CD8-positive, alpha-beta memory T cell (primary cell): ENCODE measurements at regions of chr14 and their contacts with region 1.

Region 1: GRCh38 chr14:22570132-22570949 is 18.7 kb downstream of the DAD1 start:
- DNase-seq: peak; percentile 70 to 97 (median 93)
- H3K4me3 ChIP-seq: peak overlapping the region; percentile 40
- H3K4me3 Mint-ChIP-seq: peak overlapping the region; percentile 55 to 88 (median 83)
- H3K27ac ChIP-seq: peak overlapping the region; percentile 55
- H3K27ac Mint-ChIP-seq: peak overlapping the region; percentile 89 to 99 (median 98)
- H3K4me1 ChIP-seq: peaks cover 49% of the 10 kb centered on the region
- H3K4me1 Mint-ChIP-seq: peaks cover 52 to 59% (median 59%) of the 10 kb centered on the region in 3 donors
- H3K27me3 ChIP-seq: no peaks in the 10 kb centered on the region
- H3K27me3 Mint-ChIP-seq: no peaks in the 10 kb centered on the region

Region 2: GRCh38 chr14:22505697-22506377 is 64.5 kb before region 1 on chr14:
- CTCF ChIA-PET with region 1: interaction called, 10 read pairs
- POLR2A ChIA-PET with region 1: interaction called, 5 read pairs
- DNase-seq: no peak
- H3K4me3 ChIP-seq: peak overlapping the region; percentile 65
- H3K4me3 Mint-ChIP-seq: peak overlapping the region; percentile 89 to 98 (median 91)
- H3K27ac ChIP-seq: peak overlapping the region; percentile 14
- H3K27ac Mint-ChIP-seq: peak overlapping the region; percentile 92 to 100 (median 96)
- H3K4me1 ChIP-seq: peaks cover 48% of the 10 kb centered on the region
- H3K4me1 Mint-ChIP-seq: peaks cover 55 to 66% (median 62%) of the 10 kb centered on the region in 3 donors
- H3K27me3 ChIP-seq: no peaks in the 10 kb centered on the region
- H3K27me3 Mint-ChIP-seq: peaks cover 0 to 1% of the 10 kb centered on the region in 2 donors

Region 3: GRCh38 chr14:22536853-22537338 is 33.4 kb before region 1 on chr14:
- CTCF ChIA-PET with region 1: interaction called, 38 read pairs
- POLR2A ChIA-PET with region 1: interaction called, 3 read pairs
- DNase-seq: peak; percentile 52 to 90 (median 68)
- H3K4me3 ChIP-seq: peak overlapping the region; percentile 60
- H3K4me3 Mint-ChIP-seq: peak overlapping the region; percentile 81 to 93 (median 85)
- H3K27ac ChIP-seq: peak overlapping the region; percentile 36
- H3K27ac Mint-ChIP-seq: peak overlapping the region; percentile 88 to 100 (median 98)
- H3K4me1 ChIP-seq: peaks cover 99% of the 10 kb centered on the region
- H3K4me1 Mint-ChIP-seq: peaks cover 96 to 100% (median 100%) of the 10 kb centered on the region in 3 donors
- H3K27me3 ChIP-seq: no peaks in the 10 kb centered on the region
- H3K27me3 Mint-ChIP-seq: no peaks in the 10 kb centered on the region

Region 4: GRCh38 chr14:22589096-22589839 is 18.9 kb after region 1 on chr14 and contains the start of gene DAD1:
- CTCF ChIA-PET with region 1: interaction called, 82 read pairs
- POLR2A ChIA-PET with region 1: interaction called, 15 read pairs
- DNase-seq: peak; percentile 98 to 100 (median 100)
- H3K4me3 ChIP-seq: peak within 1 kb of the TSS; percentile 90
- H3K4me3 Mint-ChIP-seq: peak within 1 kb of the TSS; percentile 92 to 99 (median 97)
- H3K27ac ChIP-seq: peak within 1 kb of the TSS; percentile 98
- H3K27ac Mint-ChIP-seq: peak within 1 kb of the TSS; percentile 95 to 100 (median 100)
- H3K4me1 ChIP-seq: peaks cover 45% of the 10 kb centered on the region
- H3K4me1 Mint-ChIP-seq: peaks cover 52 to 61% (median 57%) of the 10 kb centered on the region in 3 donors
- H3K27me3 ChIP-seq: no peaks in the 10 kb centered on the region
- H3K27me3 Mint-ChIP-seq: peaks cover 4% of the 10 kb centered on the region in 2 donors
- total RNA-seq, gene DAD1: 329 to 353 TPM

Region 5: DNA sequence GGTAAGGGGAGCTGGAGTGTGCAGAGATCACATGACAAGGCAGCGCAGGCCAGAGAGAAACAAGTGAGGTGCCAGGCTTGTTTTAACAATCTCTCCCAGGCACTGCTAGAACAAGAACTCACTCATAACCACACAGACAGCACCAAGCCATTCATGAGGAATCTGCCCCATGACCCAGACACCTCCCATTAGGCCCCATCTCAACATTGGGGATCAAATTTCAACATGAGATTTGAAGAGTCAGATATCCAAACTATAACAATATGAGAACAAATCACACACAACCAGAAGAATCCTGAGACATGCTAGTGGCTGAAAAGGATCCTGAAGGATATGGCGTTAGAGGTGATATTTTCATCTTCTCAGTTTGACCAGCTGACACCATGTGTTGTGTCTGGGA is 51.9 kb after region 1 on chr14:
- CTCF ChIA-PET with region 1: no interaction called
- POLR2A ChIA-PET with region 1: no interaction called
- DNase-seq: no peak
- H3K4me3 ChIP-seq: no peak overlapping the region
- H3K4me3 Mint-ChIP-seq: no peak overlapping the region
- H3K27ac ChIP-seq: no peak overlapping the region
- H3K27ac Mint-ChIP-seq: peak overlapping the region in 1 of 8 donors; percentile 0
- H3K4me1 ChIP-seq: no peaks in the 10 kb centered on the region
- H3K4me1 Mint-ChIP-seq: no peaks in the 10 kb centered on the region
- H3K27me3 ChIP-seq: no peaks in the 10 kb centered on the region
- H3K27me3 Mint-ChIP-seq: peaks cover 4 to 18% of the 10 kb centered on the region in 2 donors

Region 6: DNA sequence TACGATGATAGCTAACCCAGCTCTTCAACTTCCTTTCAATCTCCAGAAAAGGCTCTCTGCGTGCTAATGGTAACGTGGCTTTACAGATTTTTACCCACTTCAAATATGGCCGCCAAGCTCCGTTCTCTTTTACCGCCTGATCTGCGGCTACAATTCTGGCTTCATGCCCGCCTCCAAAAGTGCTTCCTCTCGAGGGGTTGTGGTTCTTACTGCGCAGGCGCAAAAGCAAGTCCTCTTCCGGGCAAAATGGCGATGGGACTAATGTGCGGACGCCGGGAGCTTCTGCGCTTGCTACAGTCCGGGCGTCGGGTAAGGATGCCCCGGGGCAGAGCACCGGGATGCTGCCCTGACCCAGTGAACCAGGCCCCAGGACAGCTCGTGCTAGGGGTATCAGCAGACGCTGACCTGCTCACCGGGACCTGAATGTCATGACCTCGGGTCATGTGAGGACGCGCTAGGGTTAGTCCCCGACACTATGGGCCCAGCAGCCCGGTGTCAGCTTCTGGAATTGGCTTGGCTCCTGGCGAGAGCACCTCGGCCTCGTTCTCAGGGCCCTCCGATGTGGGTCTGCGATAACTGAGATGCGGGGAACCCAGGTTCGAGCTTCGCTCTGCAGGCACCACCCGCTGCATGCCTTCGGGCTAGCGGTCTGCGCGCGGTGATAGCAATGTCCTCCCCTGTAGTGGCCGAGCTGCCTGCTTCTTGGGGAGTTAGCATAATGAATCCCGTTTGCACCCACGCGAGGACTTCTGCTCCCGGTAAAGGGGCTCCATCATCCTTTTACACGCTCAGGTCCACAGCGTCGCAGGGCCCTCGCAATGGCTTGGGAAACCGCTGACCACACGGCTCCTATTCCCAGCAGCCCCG is 196.3 kb after region 1 on chr14 and contains the start of gene OXA1L:
- CTCF ChIA-PET with region 1: interaction called, 12 read pairs
- POLR2A ChIA-PET with region 1: interaction called, 4 read pairs
- DNase-seq: peak; percentile 93 to 99 (median 96)
- H3K4me3 ChIP-seq: peak within 1 kb of the TSS; percentile 71
- H3K4me3 Mint-ChIP-seq: peak within 1 kb of the TSS; percentile 92 to 98 (median 96)
- H3K27ac ChIP-seq: peak within 1 kb of the TSS; percentile 77
- H3K27ac Mint-ChIP-seq: peak within 1 kb of the TSS; percentile 81 to 99 (median 98)
- H3K4me1 ChIP-seq: peaks cover 21% of the 10 kb centered on the region
- H3K4me1 Mint-ChIP-seq: peaks cover 32 to 40% (median 39%) of the 10 kb centered on the region in 3 donors
- H3K27me3 ChIP-seq: no peaks in the 10 kb centered on the region
- H3K27me3 Mint-ChIP-seq: peaks cover 0 to 1% of the 10 kb centered on the region in 2 donors
- total RNA-seq, gene OXA1L: 126 to 128 TPM

Region 7: GRCh38 chr14:22900081-22900799 is 329.9 kb after region 1 on chr14:
- CTCF ChIA-PET with region 1: interaction called, 14 read pairs
- POLR2A ChIA-PET with region 1: no interaction called
- DNase-seq: peak in 2 of 5 donors; percentile 49 to 57
- H3K4me3 ChIP-seq: no peak overlapping the region
- H3K4me3 Mint-ChIP-seq: no peak overlapping the region
- H3K27ac ChIP-seq: no peak overlapping the region
- H3K27ac Mint-ChIP-seq: peak overlapping the region in 6 of 8 donors; percentile 0 to 65 (median 26)
- H3K4me1 ChIP-seq: peaks cover 7% of the 10 kb centered on the region
- H3K4me1 Mint-ChIP-seq: peaks cover 5 to 10% (median 5%) of the 10 kb centered on the region in 3 donors
- H3K27me3 ChIP-seq: no peaks in the 10 kb centered on the region
- H3K27me3 Mint-ChIP-seq: no peaks in the 10 kb centered on the region

Region 8: DNA sequence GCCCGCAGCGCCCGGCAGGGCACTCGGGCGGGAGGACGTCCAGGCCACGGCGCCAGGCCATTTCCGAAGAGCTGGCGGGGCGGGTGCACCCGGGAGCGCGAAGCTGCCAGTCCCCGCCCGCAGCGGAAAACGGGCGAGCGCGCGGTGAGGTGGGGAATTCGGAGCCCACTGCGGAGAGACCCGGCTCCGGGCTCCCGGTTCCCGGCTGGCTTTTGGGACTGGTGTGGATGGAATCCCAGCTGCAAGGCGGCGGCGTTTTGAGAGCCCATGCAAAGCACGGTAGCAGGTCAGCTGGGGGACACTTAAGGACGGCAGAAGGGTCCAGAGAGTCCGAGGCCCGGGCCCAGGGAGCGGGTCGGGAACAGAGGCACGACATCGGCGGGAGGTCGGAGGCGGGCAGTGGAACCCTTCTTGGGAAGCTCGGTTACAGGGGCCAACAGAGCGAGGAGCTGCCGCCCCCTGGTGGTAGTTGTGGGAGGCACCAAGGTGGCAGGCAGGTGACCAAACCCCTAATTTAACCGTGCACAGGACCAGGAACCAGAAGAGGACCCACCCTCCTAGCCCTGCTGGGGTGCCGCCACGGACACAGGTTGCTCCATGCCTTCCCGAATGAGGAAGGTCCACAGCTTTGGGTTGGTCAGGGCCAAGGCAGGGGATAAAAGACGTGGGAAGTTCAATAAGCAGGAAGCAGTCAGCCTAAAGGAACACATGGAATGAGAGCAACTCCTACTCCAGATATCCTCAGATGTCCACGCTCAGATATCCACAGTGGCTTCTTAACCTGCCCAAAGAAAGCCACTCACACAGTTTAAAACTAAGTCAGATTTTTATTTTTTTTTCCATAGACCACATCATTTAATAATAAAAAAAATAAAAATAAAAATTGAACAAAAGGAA is 487.7 kb after region 1 on chr14:
- CTCF ChIA-PET with region 1: interaction called, 10 read pairs
- POLR2A ChIA-PET with region 1: interaction called, 3 read pairs
- DNase-seq: peak; percentile 74 to 90 (median 81)
- H3K4me3 ChIP-seq: peak overlapping the region; percentile 74
- H3K4me3 Mint-ChIP-seq: peak overlapping the region; percentile 85 to 95 (median 90)
- H3K27ac ChIP-seq: no peak overlapping the region
- H3K27ac Mint-ChIP-seq: peak overlapping the region in 7 of 8 donors; percentile 37 to 92 (median 66)
- H3K4me1 ChIP-seq: peaks cover 14% of the 10 kb centered on the region
- H3K4me1 Mint-ChIP-seq: peaks cover 16 to 19% (median 18%) of the 10 kb centered on the region in 3 donors
- H3K27me3 ChIP-seq: no peaks in the 10 kb centered on the region
- H3K27me3 Mint-ChIP-seq: no peaks in the 10 kb centered on the region